Activated CD8-positive, alpha-beta T cell treated with anti-CD3 and anti-CD28 coated beads, Interleukin-2, amount 10 ng/mL, durations not matched to agents 7 days and 5 days (primary cell): ENCODE measurements at regions of chr7 and their contacts with region 1.

Region 1: GRCh38 chr7:150514748-150515222 is at the start of gene GIMAP7:
- DNase-seq: peak; percentile 84
- ATAC-seq: peak; percentile 82
- H3K4me3 Mint-ChIP-seq: peak within 1 kb of the TSS; percentile 97
- H3K27ac Mint-ChIP-seq: peak within 1 kb of the TSS; percentile 98
- H3K4me1 Mint-ChIP-seq: peaks cover 48% of the 10 kb centered on the region
- H3K27me3 Mint-ChIP-seq: no peaks in the 10 kb centered on the region
- total RNA-seq, gene GIMAP7: 134 TPM

Region 2: GRCh38 chr7:150323682-150324128 is 191.1 kb before region 1 on chr7:
- CTCF ChIA-PET with region 1: no interaction called
- POLR2A ChIA-PET with region 1: no interaction called
- DNase-seq: no peak
- ATAC-seq: peak; percentile 39
- H3K4me3 Mint-ChIP-seq: peak overlapping the region; percentile 91
- H3K27ac Mint-ChIP-seq: peak overlapping the region; percentile 97
- H3K4me1 Mint-ChIP-seq: peaks cover 30% of the 10 kb centered on the region
- H3K27me3 Mint-ChIP-seq: no peaks in the 10 kb centered on the region

Region 3: DNA sequence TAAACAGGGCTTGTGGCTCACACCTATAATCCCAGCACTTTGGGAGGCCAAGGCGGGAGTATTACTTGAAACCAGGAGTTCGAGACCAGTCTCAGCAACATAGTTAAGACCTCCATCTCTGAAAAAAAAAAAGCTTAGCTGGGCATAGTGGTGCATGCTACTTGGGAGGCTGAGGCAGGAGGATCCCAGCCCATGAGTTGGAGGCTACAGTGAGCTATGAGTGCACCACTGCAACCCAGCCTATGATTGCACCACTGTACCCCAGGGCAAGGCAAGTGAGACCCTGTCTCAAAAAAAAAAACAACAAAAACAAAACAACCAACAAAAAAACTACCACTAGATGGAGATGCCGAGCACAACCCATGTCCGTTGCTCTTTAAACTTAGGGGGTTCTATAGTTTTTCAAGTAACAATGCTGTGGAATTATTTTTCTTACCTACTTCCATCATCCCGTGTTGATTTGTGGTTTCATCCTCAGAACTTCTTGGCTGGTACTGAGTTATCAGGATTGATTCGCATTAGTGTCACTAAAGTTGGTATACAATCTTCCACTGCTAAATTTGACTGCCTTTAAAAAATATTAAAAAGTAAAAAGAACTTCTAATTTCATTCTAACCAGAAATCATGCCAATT is 158.4 kb before region 1 on chr7:
- CTCF ChIA-PET with region 1: no interaction called
- POLR2A ChIA-PET with region 1: no interaction called
- DNase-seq: peak; percentile 45
- ATAC-seq: no peak
- H3K4me3 Mint-ChIP-seq: no peak overlapping the region
- H3K27ac Mint-ChIP-seq: peak overlapping the region; percentile 25
- H3K4me1 Mint-ChIP-seq: peaks cover 41% of the 10 kb centered on the region
- H3K27me3 Mint-ChIP-seq: peaks cover 7% of the 10 kb centered on the region

Region 4: DNA sequence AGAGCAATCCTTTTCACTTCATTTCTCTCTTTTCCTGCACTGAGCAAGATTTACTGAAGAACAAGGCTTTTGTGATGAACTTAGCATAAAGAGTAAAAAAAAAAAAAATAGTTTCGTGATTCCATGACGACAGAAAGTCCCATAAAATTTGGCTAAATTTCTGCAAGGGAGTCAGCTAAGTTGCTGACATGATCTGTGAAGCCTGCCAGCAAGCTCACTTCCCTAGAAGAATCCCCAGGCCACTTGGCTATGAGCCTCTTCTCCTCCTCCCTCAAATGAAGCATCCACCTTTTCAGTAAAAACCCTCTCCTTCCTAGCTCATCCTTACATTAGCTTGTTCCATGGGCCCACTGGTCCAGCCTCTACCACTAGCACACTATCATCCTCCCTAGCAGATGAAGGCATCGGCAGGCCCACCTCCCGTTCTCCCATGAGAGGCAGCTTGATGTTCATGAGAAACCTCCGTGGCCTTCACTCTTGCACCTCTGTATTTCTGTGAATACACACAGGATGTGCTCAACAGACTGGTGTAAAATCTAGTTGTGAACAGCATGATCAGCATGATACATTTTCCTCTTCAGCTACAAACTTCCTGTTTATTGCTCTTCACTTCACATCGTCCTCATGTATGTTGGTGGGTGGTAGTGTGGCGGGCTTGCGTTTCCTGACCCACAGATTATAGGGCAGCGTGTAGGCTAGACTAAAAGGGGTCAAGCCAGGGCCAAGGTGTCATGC is 33.4 kb before region 1 on chr7:
- CTCF ChIA-PET with region 1: interaction called, 19 read pairs
- POLR2A ChIA-PET with region 1: interaction called, 72 read pairs
- DNase-seq: peak; percentile 78
- ATAC-seq: peak; percentile 70
- H3K4me3 Mint-ChIP-seq: peak overlapping the region; percentile 75
- H3K27ac Mint-ChIP-seq: peak overlapping the region; percentile 99
- H3K4me1 Mint-ChIP-seq: peaks cover 87% of the 10 kb centered on the region
- H3K27me3 Mint-ChIP-seq: no peaks in the 10 kb centered on the region

Region 5: DNA sequence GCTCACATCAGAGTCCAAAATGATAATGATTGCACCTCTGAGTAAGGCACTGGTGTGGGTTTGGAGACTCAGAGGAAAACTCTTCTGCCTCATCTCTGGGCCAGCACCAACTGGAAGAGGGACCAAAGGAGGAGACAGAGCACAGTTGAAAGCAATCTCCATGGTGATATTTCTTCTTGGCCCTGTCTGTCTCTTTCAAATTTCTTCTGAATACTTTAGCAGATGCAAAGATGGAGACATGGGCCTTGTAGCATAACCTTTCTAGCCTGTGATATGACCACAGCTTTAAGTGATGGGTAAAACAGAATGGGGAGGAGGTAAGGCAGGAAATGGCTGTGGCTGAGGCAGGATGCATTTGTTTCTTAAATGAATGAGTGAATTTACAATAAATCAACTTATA is 12.3 kb before region 1 on chr7:
- CTCF ChIA-PET with region 1: interaction called, 22 read pairs
- POLR2A ChIA-PET with region 1: interaction called, 82 read pairs
- DNase-seq: peak; percentile 77
- ATAC-seq: peak; percentile 91
- H3K4me3 Mint-ChIP-seq: peak overlapping the region; percentile 53
- H3K27ac Mint-ChIP-seq: peak overlapping the region; percentile 95
- H3K4me1 Mint-ChIP-seq: peaks cover 80% of the 10 kb centered on the region
- H3K27me3 Mint-ChIP-seq: no peaks in the 10 kb centered on the region

Region 6: GRCh38 chr7:150631866-150632864 is 117.4 kb after region 1 on chr7 and contains the start of gene GIMAP6:
- CTCF ChIA-PET with region 1: no interaction called
- POLR2A ChIA-PET with region 1: interaction called, 15 read pairs
- DNase-seq: peak; percentile 59
- ATAC-seq: peak; percentile 68
- H3K4me3 Mint-ChIP-seq: peak within 1 kb of the TSS; percentile 89
- H3K27ac Mint-ChIP-seq: peak within 1 kb of the TSS; percentile 90
- H3K4me1 Mint-ChIP-seq: peaks cover 60% of the 10 kb centered on the region
- H3K27me3 Mint-ChIP-seq: no peaks in the 10 kb centered on the region
- total RNA-seq, gene GIMAP6: 88.9 to 93.3 TPM

Region 7: GRCh38 chr7:150716368-150716767 is 201.6 kb after region 1 on chr7 and contains the start of gene GIMAP1:
- CTCF ChIA-PET with region 1: interaction called, 16 read pairs
- POLR2A ChIA-PET with region 1: interaction called, 28 read pairs
- DNase-seq: peak; percentile 71
- ATAC-seq: peak; percentile 85
- H3K4me3 Mint-ChIP-seq: peak within 1 kb of the TSS; percentile 97
- H3K27ac Mint-ChIP-seq: peak within 1 kb of the TSS; percentile 87
- H3K4me1 Mint-ChIP-seq: peaks cover 51% of the 10 kb centered on the region
- H3K27me3 Mint-ChIP-seq: no peaks in the 10 kb centered on the region
- total RNA-seq, gene GIMAP1: 19.0 to 20.2 TPM

Region 8: GRCh38 chr7:150753826-150754603 is 239.2 kb after region 1 on chr7:
- CTCF ChIA-PET with region 1: interaction called, 18 read pairs
- POLR2A ChIA-PET with region 1: interaction called, 23 read pairs
- DNase-seq: peak; percentile 50
- ATAC-seq: peak; percentile 21
- H3K4me3 Mint-ChIP-seq: peak overlapping the region; percentile 40
- H3K27ac Mint-ChIP-seq: peak overlapping the region; percentile 86
- H3K4me1 Mint-ChIP-seq: peaks cover 70% of the 10 kb centered on the region
- H3K27me3 Mint-ChIP-seq: no peaks in the 10 kb centered on the region

Region 9: GRCh38 chr7:151198945-151199848 is 684.4 kb after region 1 on chr7:
- CTCF ChIA-PET with region 1: no interaction called
- POLR2A ChIA-PET with region 1: no interaction called
- DNase-seq: no peak
- ATAC-seq: no peak
- H3K4me3 Mint-ChIP-seq: no peak overlapping the region
- H3K27ac Mint-ChIP-seq: no peak overlapping the region
- H3K4me1 Mint-ChIP-seq: peaks cover 7% of the 10 kb centered on the region
- H3K27me3 Mint-ChIP-seq: peaks cover 25% of the 10 kb centered on the region